ENCODE measurements at regions of chrX and their contacts with region 1.

Region 1: GRCh38 chrX:19849464-19850080 is 37.8 kb downstream of the SH3KBP1 start:
- DNase-seq: no peak
- ATAC-seq: no peak
- H3K4me3 ChIP-seq: no peak overlapping the region
- H3K27ac ChIP-seq: peak overlapping the region in 1 of 10 donors; percentile 36
- H3K4me1 ChIP-seq: peaks cover 0 to 29% (median 0%) of the 10 kb centered on the region in 9 donors
- H3K27me3 ChIP-seq: no peaks in the 10 kb centered on the region
- CTCF ChIP-seq: no peak

Region 2: DNA sequence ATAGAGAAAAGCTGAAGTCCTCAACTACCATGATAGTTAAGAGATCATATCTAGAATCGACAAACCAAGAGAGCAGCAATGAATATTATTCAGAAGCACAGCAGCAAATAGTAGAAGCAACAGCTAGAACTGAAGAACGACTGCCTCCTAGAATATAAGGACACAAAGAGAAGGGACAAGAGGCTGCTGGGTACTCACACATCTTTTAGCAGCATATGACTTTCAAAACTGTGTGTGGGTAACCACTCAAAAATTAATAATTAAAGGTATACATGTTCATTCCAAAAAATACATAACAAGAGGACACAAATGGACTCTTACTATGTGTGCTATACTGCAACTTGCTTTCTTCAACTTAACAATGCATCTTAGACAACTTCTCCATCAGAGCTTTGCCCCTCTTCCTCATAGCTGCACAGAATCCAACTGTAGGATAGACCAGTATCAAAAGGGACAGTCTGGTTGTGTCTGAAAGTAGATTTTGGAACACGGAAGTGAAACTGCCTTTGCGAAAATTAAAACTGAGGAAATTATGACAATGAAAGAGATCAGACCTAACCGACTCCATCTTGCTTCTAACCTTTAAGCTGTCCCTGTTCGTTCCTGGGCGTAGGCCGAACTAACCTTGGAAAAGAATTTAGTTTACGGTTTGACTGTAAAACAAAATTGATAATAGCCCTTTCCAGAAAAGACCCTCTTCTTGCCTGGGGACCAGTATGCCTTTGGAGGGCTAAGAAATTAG is 87.8 kb before region 1 on chrX:
- intact Hi-C with region 1: loop called in 1 of 10 experiments (anchors 10 kb)
- DNase-seq: no peak
- ATAC-seq: no peak
- H3K4me3 ChIP-seq: no peak overlapping the region
- H3K27ac ChIP-seq: no peak overlapping the region
- H3K4me1 ChIP-seq: peaks cover 0 to 14% (median under 1%) of the 10 kb centered on the region in 9 donors
- H3K27me3 ChIP-seq: no peaks in the 10 kb centered on the region
- CTCF ChIP-seq: no peak

Region 3: GRCh38 chrX:19811807-19812604 is 37.6 kb before region 1 on chrX:
- intact Hi-C with region 1: loop called in 1 of 10 experiments (anchors 5 kb)
- DNase-seq: no peak
- ATAC-seq: no peak
- H3K4me3 ChIP-seq: no peak overlapping the region
- H3K27ac ChIP-seq: peak overlapping the region in 1 of 10 donors; percentile 54
- H3K4me1 ChIP-seq: peaks cover 0 to 25% (median 0%) of the 10 kb centered on the region in 9 donors
- H3K27me3 ChIP-seq: no peaks in the 10 kb centered on the region
- CTCF ChIP-seq: no peak

Measured in heart right ventricle (tissue), 16 donors.